Cardiac septum (tissue), 1 donor: ENCODE measurements at regions of chr5 and their contacts with region 1.

Region 1: GRCh38 chr5:39948867-39949468 is 524.2 kb upstream of the DAB2 start:
- DNase-seq: no peak

Region 2: DNA sequence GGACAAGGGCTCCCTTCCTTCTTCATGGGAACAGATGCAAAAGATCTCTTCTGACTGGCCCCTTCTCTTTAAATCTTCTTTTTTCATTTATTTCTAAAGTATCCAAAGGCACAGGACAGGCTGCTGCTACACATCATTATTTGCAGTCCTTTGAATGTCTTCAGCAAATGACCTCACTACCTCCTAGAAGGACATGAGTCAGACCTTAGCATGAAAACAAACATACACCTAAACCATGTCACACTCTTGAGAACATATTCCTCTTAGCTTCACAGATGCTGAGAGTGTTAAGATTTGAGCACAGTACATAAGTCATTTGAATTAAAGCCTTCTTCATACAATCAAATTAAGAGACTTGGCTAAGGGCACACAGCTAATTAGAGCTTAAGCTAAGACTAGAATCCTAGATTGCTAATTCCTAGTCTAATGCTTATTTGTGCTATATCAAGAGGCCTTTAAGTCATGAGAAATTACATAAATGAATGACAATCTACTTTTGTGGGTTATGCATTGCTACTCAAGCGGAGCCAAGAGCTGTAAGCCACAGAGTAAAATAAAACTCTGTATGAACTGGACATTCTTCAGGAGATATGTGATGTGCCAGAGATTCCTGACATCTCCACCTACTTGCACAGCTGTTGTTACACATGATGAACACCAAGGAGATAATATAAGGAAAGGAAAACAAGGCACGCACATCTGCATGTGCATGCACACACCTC is 621.6 kb after region 1 on chr5:
- intact Hi-C with region 1: loop called (anchors 10 kb)
- DNase-seq: no peak